Activated T-helper 1 cell treated with anti-CD3 and anti-CD28 coated beads, Interleukin-12 subunit alpha, Interleukin-12 subunit beta, Interleukin-2, Interleukin-4 antibody, amounts not matched to agents 30 ng/mL and 10 ng/mL and 1 ng/mL, durations not matched to agents 14 hours and 24 hours and 36 hours (primary cell): ENCODE measurements at regions of chr18 and their contacts with region 1.

Region 1: GRCh38 chr18:34352385-34353163 is 127.9 kb upstream of the NOL4 start:
- DNase-seq: no peak
- H3K4me3 Mint-ChIP-seq: no peak overlapping the region
- H3K27ac Mint-ChIP-seq: no peak overlapping the region
- H3K4me1 Mint-ChIP-seq: no peaks in the 10 kb centered on the region
- H3K27me3 Mint-ChIP-seq: no peaks in the 10 kb centered on the region

Region 2: GRCh38 chr18:34364699-34365098 is 12.1 kb after region 1 on chr18:
- intact Hi-C with region 1: loop called (anchors 1 kb)
- DNase-seq: no peak
- H3K4me3 Mint-ChIP-seq: no peak overlapping the region
- H3K27ac Mint-ChIP-seq: no peak overlapping the region
- H3K4me1 Mint-ChIP-seq: no peaks in the 10 kb centered on the region
- H3K27me3 Mint-ChIP-seq: no peaks in the 10 kb centered on the region